ENCODE measurements at regions of chr5 and their contacts with region 1.

Region 1: GRCh38 chr5:151274670-151275069 is 21.7 kb downstream of the GM2A start:
- DNase-seq: no peak
- H3K4me3 ChIP-seq: no peak overlapping the region
- H3K27ac ChIP-seq: no peak overlapping the region
- H3K4me1 ChIP-seq: no peaks in the 10 kb centered on the region
- H3K27me3 ChIP-seq: no peaks in the 10 kb centered on the region
- CTCF ChIP-seq: no peak

Region 2: DNA sequence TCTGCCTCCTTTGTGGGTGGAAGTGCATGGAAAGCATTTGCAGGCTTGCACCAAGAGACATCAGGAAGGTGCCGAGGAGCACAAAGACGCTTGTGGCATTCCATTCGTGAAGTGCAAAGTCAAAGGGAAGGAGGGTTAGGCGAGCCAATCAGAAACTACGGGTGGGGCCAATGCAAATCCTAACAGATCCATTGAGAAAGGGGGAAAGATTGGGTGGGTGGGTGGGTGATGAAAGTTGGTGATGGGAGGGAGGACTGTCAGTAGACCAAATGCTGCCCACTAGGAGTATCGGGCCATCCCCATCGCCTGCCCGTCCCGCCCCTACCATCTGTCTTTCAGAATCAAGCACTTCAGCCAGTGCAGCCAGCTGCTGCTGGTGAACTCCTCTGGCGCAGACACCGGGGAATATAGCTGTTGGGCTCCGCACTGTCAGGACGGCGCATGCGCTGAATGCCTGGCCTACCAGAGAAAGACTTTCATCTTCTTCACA is 100.0 kb before region 1 on chr5:
- CTCF ChIA-PET with region 1: no interaction called
- dilution Hi-C with region 1: no loop called
- in situ Hi-C with region 1: no loop called
- intact Hi-C with region 1: no loop called
- DNase-seq: no peak
- H3K4me3 ChIP-seq: no peak overlapping the region
- H3K27ac ChIP-seq: no peak overlapping the region
- H3K4me1 ChIP-seq: no peaks in the 10 kb centered on the region
- H3K27me3 ChIP-seq: no peaks in the 10 kb centered on the region
- CTCF ChIP-seq: no peak

Region 3: DNA sequence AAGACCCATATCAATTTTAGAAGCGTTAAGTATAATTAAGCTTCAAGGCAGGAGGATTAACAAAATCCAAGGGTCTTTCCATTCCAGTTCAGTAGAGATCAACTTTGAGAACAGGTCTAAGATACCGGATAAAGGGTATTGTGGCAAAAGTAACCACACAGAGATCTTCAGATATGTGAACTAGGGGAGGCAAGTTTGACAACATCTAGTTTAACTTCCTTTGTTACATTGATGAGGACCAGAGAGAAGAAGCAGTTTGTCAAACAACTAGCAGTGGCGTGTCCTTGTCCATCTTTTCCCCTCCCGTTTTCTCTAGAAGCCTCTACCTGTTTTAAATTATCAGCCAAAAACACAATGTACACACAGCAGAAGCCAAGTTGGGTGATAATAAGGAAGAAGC is 64.1 kb after region 1 on chr5:
- CTCF ChIA-PET with region 1: no interaction called
- dilution Hi-C with region 1: loop called (anchors 5 kb)
- in situ Hi-C with region 1: no loop called
- intact Hi-C with region 1: no loop called
- DNase-seq: no peak
- H3K4me3 ChIP-seq: no peak overlapping the region
- H3K27ac ChIP-seq: no peak overlapping the region
- H3K4me1 ChIP-seq: no peaks in the 10 kb centered on the region
- H3K27me3 ChIP-seq: peaks cover 5% of the 10 kb centered on the region
- CTCF ChIP-seq: no peak